ENCODE measurements at regions of chr11 and their contacts with region 1.

Region 1: GRCh38 chr11:114180301-114181055 is 115.7 kb upstream of the NNMT start:
- DNase-seq: peak; percentile 61
- H3K4me3 Mint-ChIP-seq: peak overlapping the region; percentile 74
- H3K27ac Mint-ChIP-seq: peak overlapping the region; percentile 99
- H3K4me1 Mint-ChIP-seq: peaks cover 81% of the 10 kb centered on the region
- H3K27me3 Mint-ChIP-seq: no peaks in the 10 kb centered on the region
- CTCF ChIP-seq: peak; percentile 70

Region 2: GRCh38 chr11:113986351-113987140 is 193.9 kb before region 1 on chr11:
- CTCF ChIA-PET with region 1: no interaction called
- POLR2A ChIA-PET with region 1: no interaction called
- intact Hi-C with region 1: no loop called
- DNase-seq: no peak
- H3K4me3 Mint-ChIP-seq: no peak overlapping the region
- H3K27ac Mint-ChIP-seq: no peak overlapping the region
- H3K4me1 Mint-ChIP-seq: no peaks in the 10 kb centered on the region
- H3K27me3 Mint-ChIP-seq: peaks cover 95% of the 10 kb centered on the region
- CTCF ChIP-seq: no peak

Region 3: DNA sequence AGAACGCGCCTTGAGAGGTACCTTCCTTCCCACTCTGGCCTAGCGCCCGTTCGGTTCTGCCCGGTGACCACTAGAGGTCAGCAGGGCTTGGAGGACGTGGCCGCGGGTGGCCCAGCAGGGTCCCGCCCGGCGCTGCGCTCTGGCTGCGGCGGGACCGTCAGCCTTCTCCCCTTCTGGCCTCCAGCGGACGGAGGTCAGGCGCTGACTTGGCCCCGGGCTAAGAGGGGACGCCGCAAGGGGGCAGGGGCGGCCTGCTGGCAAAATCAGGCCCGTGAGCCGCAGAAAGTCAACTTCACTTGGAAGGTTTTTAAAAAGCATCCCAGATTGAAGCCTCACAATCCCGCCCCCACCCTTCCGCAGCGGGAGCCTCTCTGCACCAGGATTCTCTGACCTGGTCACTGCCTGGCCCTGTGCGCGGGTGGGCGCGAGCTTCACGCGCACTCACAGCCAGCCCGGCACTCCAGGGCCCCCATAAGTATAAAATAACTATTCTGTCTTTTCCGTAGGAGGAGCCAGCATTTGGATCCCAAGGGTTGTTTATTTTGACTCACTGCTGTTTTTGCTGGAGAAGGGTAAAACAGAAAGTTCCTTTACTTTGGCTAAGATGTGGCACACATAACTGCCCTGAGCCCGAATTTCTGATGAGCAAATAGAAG is 144.2 kb before region 1 on chr11:
- CTCF ChIA-PET with region 1: interaction called, 4 read pairs
- POLR2A ChIA-PET with region 1: interaction called, 7 read pairs
- intact Hi-C with region 1: loop called (anchors 1 kb)
- DNase-seq: peak; percentile 84
- H3K4me3 Mint-ChIP-seq: peak overlapping the region; percentile 68
- H3K27ac Mint-ChIP-seq: peak overlapping the region; percentile 70
- H3K4me1 Mint-ChIP-seq: peaks cover 27% of the 10 kb centered on the region
- H3K27me3 Mint-ChIP-seq: no peaks in the 10 kb centered on the region
- CTCF ChIP-seq: peak; percentile 82

Region 4: GRCh38 chr11:114080219-114080618 is 100.3 kb before region 1 on chr11:
- CTCF ChIA-PET with region 1: interaction called, 3 read pairs
- POLR2A ChIA-PET with region 1: interaction called, 10 read pairs
- intact Hi-C with region 1: no loop called
- DNase-seq: peak; percentile 75
- H3K4me3 Mint-ChIP-seq: peak overlapping the region; percentile 67
- H3K27ac Mint-ChIP-seq: peak overlapping the region; percentile 52
- H3K4me1 Mint-ChIP-seq: peaks cover 78% of the 10 kb centered on the region
- H3K27me3 Mint-ChIP-seq: no peaks in the 10 kb centered on the region
- CTCF ChIP-seq: no peak

Region 5: DNA sequence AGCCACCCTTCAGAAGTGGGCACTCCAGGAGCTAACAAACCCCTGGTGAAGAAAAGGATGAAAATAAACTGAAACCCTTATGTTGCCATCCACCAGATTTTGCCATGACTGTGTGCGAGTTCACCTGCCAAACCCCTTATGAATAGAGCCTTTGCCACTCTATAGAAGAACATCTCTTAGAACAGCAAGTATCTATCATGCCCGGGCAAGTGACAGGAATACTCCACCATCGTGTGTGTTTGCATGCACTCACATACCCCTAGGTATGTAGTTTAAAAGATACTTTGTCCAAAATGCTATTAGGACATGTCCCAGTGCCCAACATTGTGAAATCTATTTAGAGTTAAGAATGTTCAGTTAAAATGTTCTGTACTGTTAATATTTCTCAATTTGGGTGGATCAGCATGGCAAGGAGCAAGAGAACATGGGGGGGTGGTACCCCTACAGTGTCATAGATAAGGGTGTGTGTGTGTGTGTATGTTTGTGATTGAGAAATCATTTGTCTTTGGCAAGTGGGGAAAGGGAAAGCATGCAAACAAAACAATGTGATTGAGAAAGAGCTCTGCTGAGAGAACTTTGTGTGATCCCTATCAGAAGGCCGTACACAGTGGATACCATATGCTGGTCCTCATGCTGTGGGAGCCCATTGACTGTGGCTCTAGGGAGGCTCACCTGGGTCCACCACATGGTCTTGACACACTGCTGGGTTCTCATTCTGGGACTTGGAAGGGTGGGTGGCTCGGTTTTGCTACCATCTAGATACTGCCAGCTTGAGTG is 26.0 kb before region 1 on chr11:
- CTCF ChIA-PET with region 1: interaction called, 4 read pairs
- POLR2A ChIA-PET with region 1: interaction called, 1,399 read pairs
- intact Hi-C with region 1: no loop called
- DNase-seq: peak; percentile 99
- H3K4me3 Mint-ChIP-seq: no peak overlapping the region
- H3K27ac Mint-ChIP-seq: peak overlapping the region; percentile 99
- H3K4me1 Mint-ChIP-seq: peaks cover 80% of the 10 kb centered on the region
- H3K27me3 Mint-ChIP-seq: no peaks in the 10 kb centered on the region
- CTCF ChIP-seq: no peak

Region 6: GRCh38 chr11:114192841-114193389 is 12.4 kb after region 1 on chr11:
- CTCF ChIA-PET with region 1: interaction called, 53 read pairs
- POLR2A ChIA-PET with region 1: interaction called, 398 read pairs
- intact Hi-C with region 1: no loop called
- DNase-seq: peak; percentile 43
- H3K4me3 Mint-ChIP-seq: no peak overlapping the region
- H3K27ac Mint-ChIP-seq: peak overlapping the region; percentile 97
- H3K4me1 Mint-ChIP-seq: peaks cover 49% of the 10 kb centered on the region
- H3K27me3 Mint-ChIP-seq: no peaks in the 10 kb centered on the region
- CTCF ChIP-seq: no peak

Region 7: GRCh38 chr11:114270531-114271270 is 90.2 kb after region 1 on chr11:
- CTCF ChIA-PET with region 1: no interaction called
- POLR2A ChIA-PET with region 1: no interaction called
- intact Hi-C with region 1: no loop called
- DNase-seq: no peak
- H3K4me3 Mint-ChIP-seq: no peak overlapping the region
- H3K27ac Mint-ChIP-seq: no peak overlapping the region
- H3K4me1 Mint-ChIP-seq: no peaks in the 10 kb centered on the region
- H3K27me3 Mint-ChIP-seq: no peaks in the 10 kb centered on the region
- CTCF ChIP-seq: no peak

Region 8: GRCh38 chr11:114295676-114296604 is 115.5 kb after region 1 on chr11 and contains the start of gene NNMT:
- CTCF ChIA-PET with region 1: interaction called, 3 read pairs
- POLR2A ChIA-PET with region 1: interaction called, 26 read pairs
- intact Hi-C with region 1: no loop called
- DNase-seq: peak; percentile 99
- H3K4me3 Mint-ChIP-seq: peak within 1 kb of the TSS; percentile 78
- H3K27ac Mint-ChIP-seq: peak within 1 kb of the TSS; percentile 98
- H3K4me1 Mint-ChIP-seq: peaks cover 37% of the 10 kb centered on the region
- H3K27me3 Mint-ChIP-seq: no peaks in the 10 kb centered on the region
- CTCF ChIP-seq: no peak
- total RNA-seq, gene NNMT: 429 and 638 TPM in 2 replicates

Region 9: DNA sequence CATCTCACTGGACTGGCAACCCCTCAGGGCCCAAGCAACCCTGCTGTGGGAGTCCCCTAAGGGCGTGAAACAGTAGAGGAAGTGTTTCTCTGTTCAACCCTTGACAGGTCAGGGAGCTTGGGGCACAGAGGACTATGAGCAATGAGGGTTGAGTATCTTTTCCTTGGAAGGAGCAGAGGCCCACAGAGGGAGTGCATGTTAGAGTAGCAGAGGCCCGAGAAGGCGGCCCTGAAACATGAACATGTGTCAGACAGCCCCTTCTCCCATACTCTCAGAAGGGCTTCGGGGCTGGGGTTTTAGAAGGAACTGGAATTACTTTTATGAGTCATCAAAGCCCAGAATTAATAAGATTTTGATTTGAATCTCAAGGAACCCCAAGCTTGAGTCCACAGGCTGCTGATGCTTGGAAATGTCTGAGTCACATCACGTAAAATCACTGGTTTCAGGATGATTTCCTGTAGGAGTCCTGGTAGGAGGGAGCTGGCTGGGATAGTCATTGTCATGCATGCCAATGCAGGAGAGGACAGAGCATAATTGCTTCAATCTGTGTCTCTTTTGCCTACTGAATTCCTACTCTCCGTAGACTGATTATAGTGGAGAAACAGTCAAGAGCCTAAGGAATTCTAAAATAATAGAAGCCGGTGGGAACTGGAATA is 197.3 kb after region 1 on chr11:
- CTCF ChIA-PET with region 1: no interaction called
- POLR2A ChIA-PET with region 1: no interaction called
- intact Hi-C with region 1: no loop called
- DNase-seq: peak; percentile 13
- H3K4me3 Mint-ChIP-seq: no peak overlapping the region
- H3K27ac Mint-ChIP-seq: no peak overlapping the region
- H3K4me1 Mint-ChIP-seq: no peaks in the 10 kb centered on the region
- H3K27me3 Mint-ChIP-seq: no peaks in the 10 kb centered on the region
- CTCF ChIP-seq: no peak

Measured in MCF 10A (cell line).